AG04449 (cell line): ENCODE measurements at regions of chr4 and their contacts with region 1.

Region 1: DNA sequence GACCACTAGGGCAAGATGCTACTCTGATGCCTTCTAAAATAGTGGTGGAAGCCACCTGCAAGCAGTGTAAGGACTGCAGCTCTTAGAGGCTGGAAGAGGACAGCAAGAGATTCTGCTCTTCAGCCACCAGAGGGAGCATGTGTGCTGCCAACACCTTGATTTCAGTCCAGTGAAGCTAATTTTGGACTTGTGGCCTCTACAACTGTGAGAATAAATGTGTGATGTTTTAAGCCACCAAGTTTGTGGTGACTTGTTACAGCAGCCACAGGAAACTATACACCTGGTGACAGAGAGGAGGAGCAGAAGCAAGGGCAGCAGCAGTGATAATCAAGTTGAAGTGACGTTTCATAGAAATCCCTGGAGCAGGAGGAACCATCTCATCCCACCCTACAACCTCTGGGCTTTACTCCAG is 55.9 kb downstream of the FGFBP1 start:
- DNase-seq: peak; percentile 38
- H3K4me3 ChIP-seq: no peak overlapping the region
- CTCF ChIP-seq: peak; percentile 91

Region 2: DNA sequence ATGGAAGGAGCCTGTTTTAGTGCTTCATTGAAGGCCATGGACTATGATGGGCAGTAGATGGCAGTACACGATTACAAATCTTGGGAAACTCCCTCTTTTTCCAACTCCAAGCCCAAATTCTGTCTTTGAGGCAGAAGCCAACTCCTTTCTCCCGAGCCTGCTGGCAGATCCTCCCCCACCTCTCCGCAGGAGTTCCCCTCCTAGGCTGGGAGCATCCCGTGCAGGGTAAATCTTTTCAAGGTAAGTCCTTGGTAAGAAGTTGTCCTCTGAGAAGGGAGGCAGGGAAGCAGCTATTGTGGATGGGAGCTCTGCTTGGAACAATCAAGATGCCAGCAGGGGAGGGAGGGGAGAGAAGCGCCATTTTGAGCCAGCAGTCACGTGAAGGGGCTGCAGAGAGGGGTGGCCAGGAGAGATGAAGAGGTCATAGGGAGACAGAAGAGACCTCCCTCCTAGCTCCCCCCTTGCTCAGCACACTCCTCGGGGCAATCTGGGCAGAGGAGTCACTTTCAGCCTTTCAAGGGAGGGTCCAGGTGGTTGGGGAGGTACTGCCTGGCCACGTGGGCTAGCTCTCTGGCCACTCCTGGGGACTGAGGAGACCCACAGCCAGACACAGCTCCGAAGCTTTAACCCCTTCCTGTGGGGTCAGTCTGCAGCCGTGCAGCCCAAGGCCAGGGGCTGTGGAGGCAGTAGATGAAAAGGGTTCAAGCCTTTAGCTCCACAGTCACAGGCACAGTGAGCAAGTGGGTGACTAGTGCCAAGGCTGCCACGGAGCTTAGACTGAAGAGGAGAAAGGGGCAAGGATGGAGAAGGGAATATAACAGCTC is 403.4 kb before region 1 on chr4:
- CTCF ChIA-PET with region 1: interaction called, 29 read pairs
- POLR2A ChIA-PET with region 1: no interaction called
- DNase-seq: peak; percentile 42
- H3K4me3 ChIP-seq: peak overlapping the region; percentile 68
- CTCF ChIP-seq: peak; percentile 67

Region 3: GRCh38 chr4:15855804-15856475 is 26.7 kb before region 1 on chr4:
- CTCF ChIA-PET with region 1: interaction called, 20 read pairs
- POLR2A ChIA-PET with region 1: no interaction called
- DNase-seq: no peak
- H3K4me3 ChIP-seq: no peak overlapping the region
- CTCF ChIP-seq: no peak

Region 4: DNA sequence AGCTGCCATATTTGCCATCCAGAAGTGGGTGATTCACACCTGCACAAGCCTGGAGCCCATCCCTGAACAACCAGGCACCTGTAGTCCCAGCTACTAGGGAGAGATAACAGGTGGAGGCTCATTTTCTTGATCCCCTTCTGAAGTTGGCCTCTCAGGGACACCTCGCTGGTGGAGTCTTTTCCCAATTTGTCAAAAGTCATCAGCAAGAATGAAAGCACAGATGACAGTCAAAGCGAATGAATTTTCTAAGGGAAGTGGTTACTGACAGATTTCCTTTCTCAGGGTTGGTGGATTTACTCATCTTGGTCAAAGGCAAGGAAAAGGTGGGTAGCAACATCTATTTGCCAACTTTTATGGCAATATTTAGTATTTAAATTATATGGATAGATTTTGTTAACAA is 19.3 kb after region 1 on chr4:
- CTCF ChIA-PET with region 1: interaction called, 68 read pairs
- POLR2A ChIA-PET with region 1: no interaction called
- DNase-seq: no peak
- H3K4me3 ChIP-seq: no peak overlapping the region
- CTCF ChIP-seq: no peak

Region 5: GRCh38 chr4:15930314-15930713 is 47.6 kb after region 1 on chr4:
- CTCF ChIA-PET with region 1: interaction called, 46 read pairs
- POLR2A ChIA-PET with region 1: no interaction called
- DNase-seq: no peak
- H3K4me3 ChIP-seq: no peak overlapping the region
- CTCF ChIP-seq: no peak

Region 6: GRCh38 chr4:15956179-15956850 is 73.6 kb after region 1 on chr4:
- CTCF ChIA-PET with region 1: interaction called, 574 read pairs
- POLR2A ChIA-PET with region 1: interaction called, 3 read pairs
- DNase-seq: peak; percentile 5
- H3K4me3 ChIP-seq: no peak overlapping the region
- CTCF ChIP-seq: peak; percentile 94

Region 7: GRCh38 chr4:16264798-16265197 is 382.1 kb after region 1 on chr4:
- CTCF ChIA-PET with region 1: interaction called, 14 read pairs
- POLR2A ChIA-PET with region 1: no interaction called
- DNase-seq: no peak
- H3K4me3 ChIP-seq: no peak overlapping the region
- CTCF ChIP-seq: peak; percentile 32

Region 8: GRCh38 chr4:17024425-17024824 is 1141.7 kb after region 1 on chr4:
- CTCF ChIA-PET with region 1: no interaction called
- POLR2A ChIA-PET with region 1: no interaction called
- DNase-seq: no peak
- H3K4me3 ChIP-seq: no peak overlapping the region
- CTCF ChIP-seq: no peak